ENCODE measurements at regions of chr1 and their contacts with region 1.

Region 1: DNA sequence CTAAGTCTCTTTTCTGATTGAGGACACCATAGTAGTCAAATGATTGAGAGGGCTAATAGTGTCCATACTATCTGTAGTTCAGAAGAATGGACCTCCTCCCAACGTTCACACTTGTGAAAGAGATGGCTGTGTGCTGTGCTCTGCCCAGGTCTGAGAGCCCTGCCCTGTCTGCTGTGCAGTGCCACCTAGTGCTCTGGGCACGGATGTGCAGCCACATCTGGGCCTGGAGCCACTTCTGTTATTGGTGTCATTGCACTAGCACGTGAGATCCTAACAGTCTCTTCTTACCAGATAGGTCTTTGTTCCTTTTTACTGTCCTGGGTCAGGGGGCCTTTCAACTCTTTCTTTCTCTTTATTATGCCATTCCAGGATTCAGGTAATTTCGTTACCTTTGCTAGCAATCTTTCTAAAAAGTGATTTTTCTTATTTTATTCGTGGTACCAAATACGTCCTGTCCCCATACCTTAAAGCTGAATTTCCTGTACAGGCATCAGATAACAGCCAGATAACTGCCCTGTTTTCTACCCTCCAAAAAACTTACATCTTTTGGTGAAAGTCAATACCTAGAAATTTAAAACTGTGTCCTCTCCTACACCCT is 21.7 kb downstream of the INTS3 start:
- DNase-seq: peak; percentile 45
- ATAC-seq: peak; percentile 100
- H3K4me3 ChIP-seq: no peak overlapping the region
- H3K27ac ChIP-seq: no peak overlapping the region
- H3K4me1 ChIP-seq: no peaks in the 10 kb centered on the region
- H3K27me3 ChIP-seq: no peaks in the 10 kb centered on the region
- CTCF ChIP-seq: peak; percentile 86 to 94 (median 94)
- POLR2A ChIP-seq: no peak
- RAD21 ChIP-seq: peak; percentile 93

Region 2: GRCh38 chr1:153677718-153678505 is 71.6 kb before region 1 on chr1:
- CTCF ChIA-PET with region 1: no interaction called
- POLR2A ChIA-PET with region 1: no interaction called
- RAD21 ChIA-PET with region 1: no interaction called
- intact Hi-C with region 1: loop called (anchors 1 kb)
- DNase-seq: peak; percentile 22
- ATAC-seq: peak; percentile 86
- H3K4me3 ChIP-seq: no peak overlapping the region
- H3K27ac ChIP-seq: no peak overlapping the region
- H3K4me1 ChIP-seq: peaks cover 0 to 4% of the 10 kb centered on the region in 2 experiments; a peak in 2 of 4 replicates
- H3K27me3 ChIP-seq: no peaks in the 10 kb centered on the region
- CTCF ChIP-seq: peak; percentile 89 to 98 (median 93)
- POLR2A ChIP-seq: no peak
- RAD21 ChIP-seq: peak; percentile 96

Region 3: DNA sequence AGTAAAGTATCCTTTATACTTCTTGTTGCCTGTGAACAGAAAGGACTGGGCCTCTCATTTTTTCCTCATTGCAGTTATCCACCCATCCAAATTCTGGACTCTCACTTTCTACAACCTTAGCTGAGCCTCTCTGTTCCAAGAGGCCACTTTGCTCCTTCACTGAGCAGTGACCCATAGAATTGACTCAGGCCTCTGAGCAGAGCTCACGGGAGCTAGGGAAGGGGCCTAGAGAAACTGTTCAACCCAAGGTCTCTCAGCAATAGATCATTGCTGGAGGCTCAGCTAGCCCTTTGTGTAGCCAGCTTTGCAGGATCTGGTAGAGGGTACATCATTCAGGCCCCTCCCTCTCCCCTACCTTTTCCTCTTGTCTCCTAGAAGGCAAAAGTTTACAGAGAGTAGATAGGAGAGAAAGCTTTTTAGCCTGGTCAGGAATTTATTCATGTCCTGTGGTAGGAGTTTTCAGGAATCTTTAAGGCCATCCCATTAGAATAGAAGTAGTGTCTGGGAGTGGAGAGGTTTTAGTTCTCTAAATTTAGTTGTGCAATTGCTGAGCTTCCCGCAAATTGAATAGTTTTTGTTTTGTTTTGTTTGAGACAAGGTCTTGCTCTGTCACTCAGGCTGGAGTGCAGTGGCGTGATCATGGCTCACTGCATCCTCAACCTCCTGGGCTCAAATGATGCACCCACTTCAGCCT is 15.0 kb before region 1 on chr1:
- CTCF ChIA-PET with region 1: no interaction called
- POLR2A ChIA-PET with region 1: no interaction called
- RAD21 ChIA-PET with region 1: no interaction called
- intact Hi-C with region 1: no loop called
- DNase-seq: no peak
- ATAC-seq: no peak
- H3K4me3 ChIP-seq: no peak overlapping the region
- H3K27ac ChIP-seq: no peak overlapping the region
- H3K4me1 ChIP-seq: peaks cover 0 to 19% of the 10 kb centered on the region in 2 experiments; a peak in 2 of 4 replicates
- H3K27me3 ChIP-seq: no peaks in the 10 kb centered on the region
- CTCF ChIP-seq: no peak
- POLR2A ChIP-seq: no peak
- RAD21 ChIP-seq: no peak

Measured in HCT116 (cell line).